Activated T-helper 1 cell treated with anti-CD3 and anti-CD28 coated beads, Interleukin-12 subunit alpha, Interleukin-12 subunit beta, Interleukin-2, Interleukin-4 antibody, amounts not matched to agents 30 ng/mL and 10 ng/mL and 1 ng/mL, durations not matched to agents 14 hours and 24 hours and 36 hours (primary cell): ENCODE measurements at regions of chr3 and their contacts with region 1.

Region 1: GRCh38 chr3:193960487-193961274 is 175.3 kb upstream of the HES1 start:
- DNase-seq: no peak
- H3K4me3 Mint-ChIP-seq: no peak overlapping the region
- H3K27ac Mint-ChIP-seq: no peak overlapping the region
- H3K4me1 Mint-ChIP-seq: peaks cover 44% of the 10 kb centered on the region
- H3K27me3 Mint-ChIP-seq: peaks cover 27% of the 10 kb centered on the region

Region 2: GRCh38 chr3:193928354-193929209 is 32.1 kb before region 1 on chr3:
- intact Hi-C with region 1: no loop called
- DNase-seq: no peak
- H3K4me3 Mint-ChIP-seq: no peak overlapping the region
- H3K27ac Mint-ChIP-seq: no peak overlapping the region
- H3K4me1 Mint-ChIP-seq: peaks cover 9% of the 10 kb centered on the region
- H3K27me3 Mint-ChIP-seq: peaks cover 9% of the 10 kb centered on the region

Region 3: DNA sequence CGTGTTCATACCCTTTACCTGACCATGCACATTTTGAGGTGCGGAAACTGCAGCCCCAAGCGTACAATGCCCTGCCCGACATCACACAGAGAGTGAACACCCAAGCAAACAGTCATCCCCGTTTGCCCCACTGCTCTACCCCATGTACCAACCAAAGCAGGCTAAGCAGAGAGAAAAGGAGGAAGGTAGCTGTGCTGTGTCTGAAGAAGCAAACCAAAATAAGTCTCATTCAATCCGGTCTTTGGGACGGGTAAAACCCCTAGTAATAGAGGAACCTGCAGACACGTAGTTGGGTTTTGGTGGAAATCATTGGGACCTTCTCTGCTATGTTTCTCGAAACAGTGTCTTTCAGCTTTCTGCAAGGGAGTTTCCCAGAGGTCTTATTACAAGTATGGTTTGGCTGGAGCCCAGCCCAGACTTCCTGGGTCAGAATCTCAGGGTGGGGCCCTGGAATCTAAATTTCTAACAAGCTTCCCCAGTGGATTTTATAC is 10.6 kb after region 1 on chr3:
- intact Hi-C with region 1: loop called (anchors 1 kb)
- DNase-seq: no peak
- H3K4me3 Mint-ChIP-seq: peak overlapping the region; percentile 31
- H3K27ac Mint-ChIP-seq: peak overlapping the region; percentile 81
- H3K4me1 Mint-ChIP-seq: peaks cover 43% of the 10 kb centered on the region
- H3K27me3 Mint-ChIP-seq: peaks cover 59% of the 10 kb centered on the region

Region 4: DNA sequence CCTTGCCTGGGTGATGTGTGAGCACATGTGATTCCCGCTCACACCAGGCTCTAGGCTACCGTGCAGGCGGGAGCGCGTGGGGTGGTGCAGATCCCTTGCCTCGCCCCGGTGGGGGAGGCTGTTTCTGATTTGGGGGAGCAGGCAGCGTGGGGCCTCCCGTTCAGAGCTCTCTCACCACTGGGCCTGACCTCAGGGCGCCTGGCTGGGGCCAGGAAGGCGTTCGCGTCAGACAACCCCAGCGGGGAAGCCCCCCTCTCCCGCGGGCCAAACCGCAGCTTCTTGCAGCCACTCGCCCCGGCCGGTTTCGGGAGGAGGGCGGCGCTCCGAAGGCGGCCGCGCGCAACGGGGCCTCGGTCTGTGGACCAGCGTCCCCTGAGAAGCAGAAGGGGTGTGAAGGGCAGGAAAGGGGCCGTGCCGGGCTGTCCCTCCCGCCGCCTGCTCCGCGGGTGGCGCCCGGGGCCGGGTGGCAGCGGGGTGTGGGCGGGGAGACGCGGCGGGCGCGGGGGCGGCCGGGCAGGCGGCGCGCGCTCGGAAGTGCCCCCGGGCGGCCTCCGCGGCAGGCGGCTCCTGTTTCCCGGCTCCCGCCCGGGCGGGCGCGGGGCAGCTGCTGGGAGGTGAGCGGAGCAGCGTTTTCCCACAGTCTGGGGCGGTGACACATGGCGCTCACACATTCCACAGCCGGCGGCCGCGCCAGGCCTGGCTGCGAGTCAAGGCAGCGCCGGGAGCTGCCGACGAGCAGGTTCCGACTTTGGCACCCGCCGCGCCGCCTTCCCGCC is 110.1 kb after region 1 on chr3:
- intact Hi-C with region 1: loop called (anchors 2 kb)
- DNase-seq: peak; percentile 65
- H3K4me3 Mint-ChIP-seq: peak overlapping the region; percentile 46
- H3K27ac Mint-ChIP-seq: no peak overlapping the region
- H3K4me1 Mint-ChIP-seq: peaks cover 38% of the 10 kb centered on the region
- H3K27me3 Mint-ChIP-seq: peaks cover 60% of the 10 kb centered on the region

Region 5: GRCh38 chr3:194306109-194306686 is 345.5 kb after region 1 on chr3:
- intact Hi-C with region 1: loop called (anchors 1 kb)
- DNase-seq: peak; percentile 65
- H3K4me3 Mint-ChIP-seq: peak overlapping the region; percentile 69
- H3K27ac Mint-ChIP-seq: peak overlapping the region; percentile 82
- H3K4me1 Mint-ChIP-seq: peaks cover 63% of the 10 kb centered on the region
- H3K27me3 Mint-ChIP-seq: peaks cover 2% of the 10 kb centered on the region